ENCODE measurements at regions of chr1 and their contacts with region 1.

Region 1: DNA sequence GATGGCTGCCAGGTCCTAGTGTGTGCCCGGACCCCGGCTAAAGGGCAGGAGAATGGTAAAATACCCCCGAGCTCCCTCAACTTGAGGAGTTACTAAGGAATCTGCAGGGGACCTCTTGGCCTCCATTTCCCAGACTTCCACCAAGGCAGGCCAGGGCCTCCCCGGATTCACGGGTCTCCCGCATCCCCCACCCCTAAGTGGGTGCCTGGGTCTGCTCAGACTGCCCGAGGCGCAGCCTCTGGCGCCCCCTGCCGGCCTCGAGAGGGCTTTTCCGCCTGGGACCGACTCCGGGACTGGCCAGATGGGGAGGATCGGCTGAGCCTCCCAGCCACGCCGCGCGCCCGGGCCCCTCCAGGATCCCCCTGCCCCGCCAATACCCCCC is 1.7 kb downstream of the PLEKHG5 start:
- DNase-seq: peak; percentile 83
- ATAC-seq: peak; percentile 71
- H3K4me3 ChIP-seq: peak overlapping the region in 4 of 5 experiments; percentile 44 to 83 (median 68)
- H3K4me3 Mint-ChIP-seq: peak overlapping the region; percentile 70
- H3K27ac ChIP-seq: no peak overlapping the region
- H3K27ac Mint-ChIP-seq: peak overlapping the region; percentile 37
- H3K4me1 ChIP-seq: peaks cover 21 to 34% of the 10 kb centered on the region in 2 donors
- H3K4me1 Mint-ChIP-seq: peaks cover 20% of the 10 kb centered on the region
- H3K27me3 ChIP-seq: peaks cover 0 to 21% (median 8%) of the 10 kb centered on the region in 4 experiments
- H3K27me3 Mint-ChIP-seq: peaks cover 12% of the 10 kb centered on the region
- CTCF ChIP-seq: peak; percentile 96

Region 2: DNA sequence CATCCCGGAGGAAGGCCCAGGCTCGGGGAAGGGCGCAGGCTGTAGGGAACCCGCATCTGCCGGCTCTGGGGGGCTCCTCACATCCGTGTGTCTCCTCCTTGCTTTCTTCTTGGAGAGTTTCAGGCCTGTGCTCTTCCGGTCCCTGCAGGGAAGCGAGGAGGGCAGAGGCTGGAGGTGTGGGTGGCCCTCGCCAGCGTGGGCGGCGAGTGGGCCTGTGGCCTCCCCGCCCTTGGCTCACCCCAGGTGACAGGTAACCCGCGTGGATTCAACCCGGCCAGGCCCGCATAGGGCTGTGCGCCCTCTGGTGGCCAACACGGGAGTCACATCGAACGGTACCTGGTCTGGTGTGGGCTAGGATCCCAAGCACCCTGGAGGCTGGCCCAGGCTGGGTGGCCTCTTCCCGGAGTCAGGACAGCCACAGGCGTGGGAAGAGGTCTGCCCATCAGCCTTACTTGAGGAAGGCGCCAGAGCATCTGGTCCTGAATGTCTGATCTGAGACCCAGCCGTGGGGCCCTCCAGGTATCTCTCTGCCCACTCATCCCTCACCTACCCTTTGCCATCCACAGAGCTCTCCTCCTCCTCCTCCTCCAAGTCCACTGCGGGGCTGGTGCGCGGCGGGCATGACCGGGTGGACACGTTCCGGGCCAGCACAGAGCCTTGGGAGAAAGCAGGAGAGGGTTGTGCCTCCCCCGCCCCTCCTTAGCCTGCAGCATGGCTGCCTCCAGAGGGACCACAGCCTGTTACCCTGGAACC is 14.2 kb before region 1 on chr1:
- CTCF ChIA-PET with region 1: interaction called, 12 read pairs
- POLR2A ChIA-PET with region 1: no interaction called
- intact Hi-C with region 1: no loop called
- DNase-seq: peak; percentile 79
- ATAC-seq: peak; percentile 90
- H3K4me3 ChIP-seq: no peak overlapping the region
- H3K4me3 Mint-ChIP-seq: no peak overlapping the region
- H3K27ac ChIP-seq: no peak overlapping the region
- H3K27ac Mint-ChIP-seq: no peak overlapping the region
- H3K4me1 ChIP-seq: peaks cover 2 to 6% of the 10 kb centered on the region in 2 donors
- H3K4me1 Mint-ChIP-seq: peaks cover 2% of the 10 kb centered on the region
- H3K27me3 ChIP-seq: peaks cover 0 to 4% (median 0%) of the 10 kb centered on the region in 4 experiments
- H3K27me3 Mint-ChIP-seq: peaks cover 3% of the 10 kb centered on the region
- CTCF ChIP-seq: peak; percentile 95

Region 3: GRCh38 chr1:6517435-6517851 is 27.7 kb after region 1 on chr1:
- CTCF ChIA-PET with region 1: no interaction called
- POLR2A ChIA-PET with region 1: no interaction called
- intact Hi-C with region 1: no loop called
- DNase-seq: no peak
- ATAC-seq: no peak
- H3K4me3 ChIP-seq: no peak overlapping the region
- H3K4me3 Mint-ChIP-seq: no peak overlapping the region
- H3K27ac ChIP-seq: no peak overlapping the region
- H3K27ac Mint-ChIP-seq: no peak overlapping the region
- H3K4me1 ChIP-seq: no peaks in the 10 kb centered on the region
- H3K4me1 Mint-ChIP-seq: no peaks in the 10 kb centered on the region
- H3K27me3 ChIP-seq: no peaks in the 10 kb centered on the region
- H3K27me3 Mint-ChIP-seq: no peaks in the 10 kb centered on the region
- CTCF ChIP-seq: no peak

Region 4: DNA sequence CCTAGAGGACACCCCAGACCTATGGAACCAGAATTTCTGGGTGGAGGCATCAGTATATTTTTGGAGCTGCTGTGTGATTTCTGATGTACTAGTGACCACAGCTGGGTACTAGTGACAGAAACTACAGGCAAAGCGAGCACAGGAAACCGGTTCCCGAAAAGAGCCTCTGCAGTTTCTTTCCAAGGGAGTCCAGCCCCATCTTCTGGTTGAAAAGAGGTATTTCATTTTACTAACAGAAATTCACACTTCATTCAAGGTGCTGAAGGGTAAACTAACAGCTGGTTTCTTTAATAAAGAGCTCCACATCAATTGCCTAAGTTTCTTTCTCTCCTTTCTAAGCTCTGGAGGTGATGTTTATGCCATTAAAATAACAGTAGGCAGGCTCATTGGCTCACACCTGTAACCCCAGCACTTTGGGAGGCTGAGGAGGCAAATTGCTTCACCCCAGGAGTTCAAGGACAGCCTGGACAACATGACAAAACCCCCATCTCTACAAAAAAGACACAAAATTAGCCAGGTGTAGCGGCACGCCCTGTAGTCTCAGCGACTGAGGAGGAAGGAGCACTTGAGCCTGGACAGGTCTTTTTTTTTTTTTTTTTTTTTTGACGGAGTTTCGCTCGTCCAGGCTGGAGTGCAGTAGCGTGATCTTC is 156.8 kb after region 1 on chr1:
- CTCF ChIA-PET with region 1: interaction called, 86 read pairs
- POLR2A ChIA-PET with region 1: no interaction called
- intact Hi-C with region 1: loop called (anchors 1 kb)
- DNase-seq: peak; percentile 63
- ATAC-seq: peak; percentile 57
- H3K4me3 ChIP-seq: no peak overlapping the region
- H3K4me3 Mint-ChIP-seq: no peak overlapping the region
- H3K27ac ChIP-seq: no peak overlapping the region
- H3K27ac Mint-ChIP-seq: no peak overlapping the region
- H3K4me1 ChIP-seq: no peaks in the 10 kb centered on the region
- H3K4me1 Mint-ChIP-seq: no peaks in the 10 kb centered on the region
- H3K27me3 ChIP-seq: no peaks in the 10 kb centered on the region
- H3K27me3 Mint-ChIP-seq: no peaks in the 10 kb centered on the region
- CTCF ChIP-seq: peak; percentile 76

Measured in B cell (primary cell).